HEK293T (cell line): ENCODE measurements at regions of chr9 and their contacts with region 1.

Region 1: DNA sequence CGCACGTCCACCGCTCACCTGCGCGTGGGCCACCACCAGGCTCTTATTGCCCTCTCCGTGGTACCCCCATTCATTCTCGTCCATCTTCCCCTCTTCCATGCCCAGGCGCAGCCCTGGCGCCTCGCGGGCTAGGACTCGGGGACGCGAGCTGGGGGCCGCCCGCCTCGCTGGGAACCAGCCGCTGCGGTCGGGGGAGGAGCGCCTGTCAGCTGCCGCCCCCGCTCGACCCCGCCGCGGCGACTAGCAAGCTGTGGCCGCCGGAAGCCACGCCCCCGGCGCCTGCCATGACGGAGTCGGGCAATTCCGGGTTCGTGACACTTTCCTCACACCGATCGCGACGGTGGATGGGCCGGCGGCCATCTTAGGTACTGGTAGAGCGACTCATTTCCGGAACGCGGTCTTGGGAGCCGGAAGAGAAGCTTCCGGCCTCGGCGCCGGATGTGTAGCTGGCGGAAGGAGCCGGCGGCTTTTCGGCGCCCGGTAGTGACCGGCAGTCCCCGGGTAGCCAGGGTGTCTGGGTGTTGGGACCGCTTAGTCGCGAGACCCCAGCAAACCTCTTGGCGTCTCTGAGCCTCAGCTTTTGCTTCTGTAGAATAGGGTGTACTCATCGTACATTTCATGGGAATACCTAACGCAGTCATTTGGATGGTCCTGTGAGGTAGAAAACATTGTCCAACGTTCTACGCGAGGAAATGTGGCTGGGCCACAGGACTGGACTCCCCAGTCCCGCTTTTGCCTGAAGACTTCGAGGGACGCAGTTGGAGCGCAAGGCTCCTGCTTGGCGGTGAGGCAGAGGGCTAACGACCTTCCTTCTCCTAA is at the start of gene IPPK:
- DNase-seq: peak; percentile 98

Region 2: DNA sequence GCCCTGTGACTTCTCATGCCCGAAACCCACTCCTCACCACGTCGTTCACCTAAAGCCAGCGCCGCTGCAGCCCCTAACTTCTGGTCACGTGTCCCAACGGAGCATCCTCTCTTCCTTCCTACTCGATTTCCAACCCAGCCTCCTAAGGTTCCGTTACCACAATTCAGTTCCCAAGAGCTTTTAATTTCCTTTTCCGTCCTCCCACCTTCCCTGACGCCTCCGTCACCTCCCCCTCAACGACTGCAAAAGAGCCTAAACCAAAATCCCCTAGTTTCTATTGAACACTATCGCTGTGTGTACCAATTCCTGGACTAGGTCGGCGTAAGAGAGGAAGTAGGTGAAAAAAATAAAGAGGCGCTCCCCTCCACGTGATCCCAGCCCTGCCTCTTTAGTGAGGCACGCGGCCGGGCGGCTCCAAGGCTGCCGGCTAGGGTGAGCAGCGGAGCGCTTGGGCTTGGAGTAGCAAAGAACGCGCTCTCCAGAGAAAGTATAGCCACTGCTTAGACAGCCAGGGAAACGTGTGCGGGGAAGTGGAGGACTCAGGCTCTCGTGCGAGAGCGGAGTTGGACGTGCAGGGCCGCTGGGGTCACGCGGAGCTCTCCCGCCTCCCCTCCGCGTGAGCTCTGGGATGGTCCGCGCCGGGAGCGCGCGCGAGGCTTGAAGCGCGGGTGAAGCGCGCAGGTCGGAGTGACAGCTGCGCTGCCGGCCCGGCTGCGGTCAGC is 344.7 kb before region 1 on chr9 and contains the starts of genes CENPP and NOL8:
- CTCF ChIA-PET with region 1: no interaction called
- POLR2A ChIA-PET with region 1: interaction called, 14 read pairs
- DNase-seq: peak; percentile 81

Region 3: DNA sequence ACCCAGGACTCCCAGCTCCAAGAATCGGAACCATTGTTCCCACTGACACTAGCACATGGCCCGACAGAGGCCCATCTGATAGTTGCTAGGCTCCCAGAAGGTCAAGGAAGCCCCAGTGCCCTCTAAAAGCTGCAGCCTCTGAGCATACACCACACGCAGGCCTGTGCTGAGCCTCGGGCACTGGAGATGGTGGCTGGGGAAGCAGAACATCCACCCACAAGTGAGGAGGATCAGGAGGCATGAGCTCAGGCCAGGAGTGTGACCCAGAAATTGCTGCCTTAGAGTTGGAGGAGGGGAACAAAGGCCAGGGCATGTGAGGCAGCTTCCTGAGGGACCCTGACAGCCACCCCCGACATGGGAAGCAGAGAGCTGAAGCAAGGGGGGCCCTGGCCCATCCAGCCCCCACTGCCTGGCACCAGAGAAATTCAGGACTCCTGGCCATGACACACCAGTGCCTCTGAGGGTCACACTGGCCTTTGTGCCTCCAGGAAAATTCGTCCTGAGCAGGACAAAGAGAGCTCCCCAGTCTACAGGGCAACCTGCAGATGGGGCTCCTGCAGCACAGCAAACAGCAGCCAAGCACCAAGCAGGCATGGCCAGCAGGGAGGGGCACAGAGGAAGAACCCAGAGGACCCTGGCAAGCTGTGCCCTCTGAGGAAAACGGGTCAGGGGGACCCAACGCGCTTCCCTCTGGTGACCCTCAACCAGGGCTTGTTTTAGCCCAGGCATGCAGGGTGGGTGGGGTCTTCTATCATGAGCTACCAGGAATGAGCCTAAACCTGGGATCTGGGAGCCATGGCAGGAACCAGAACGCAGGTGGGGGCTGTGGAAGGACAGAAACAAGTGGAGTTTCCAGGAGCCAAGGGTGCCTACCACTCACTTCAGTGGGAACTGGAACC is 21.4 kb before region 1 on chr9:
- CTCF ChIA-PET with region 1: no interaction called
- POLR2A ChIA-PET with region 1: no interaction called
- DNase-seq: no peak